BJ (cell line): ENCODE measurements at regions of chr5 and their contacts with region 1.

Region 1: GRCh38 chr5:140244525-140245025 is 58.3 kb downstream of the PFDN1 start:
- DNase-seq: no peak
- H3K4me3 ChIP-seq: no peak overlapping the region
- H3K27me3 ChIP-seq: no peaks in the 10 kb centered on the region
- CTCF ChIP-seq: peak; percentile 86

Region 2: GRCh38 chr5:140196115-140196814 is 48.3 kb before region 1 on chr5:
- CTCF ChIA-PET with region 1: no interaction called
- POLR2A ChIA-PET with region 1: no interaction called
- DNase-seq: no peak
- H3K4me3 ChIP-seq: no peak overlapping the region
- H3K27me3 ChIP-seq: no peaks in the 10 kb centered on the region
- CTCF ChIP-seq: no peak

Region 3: DNA sequence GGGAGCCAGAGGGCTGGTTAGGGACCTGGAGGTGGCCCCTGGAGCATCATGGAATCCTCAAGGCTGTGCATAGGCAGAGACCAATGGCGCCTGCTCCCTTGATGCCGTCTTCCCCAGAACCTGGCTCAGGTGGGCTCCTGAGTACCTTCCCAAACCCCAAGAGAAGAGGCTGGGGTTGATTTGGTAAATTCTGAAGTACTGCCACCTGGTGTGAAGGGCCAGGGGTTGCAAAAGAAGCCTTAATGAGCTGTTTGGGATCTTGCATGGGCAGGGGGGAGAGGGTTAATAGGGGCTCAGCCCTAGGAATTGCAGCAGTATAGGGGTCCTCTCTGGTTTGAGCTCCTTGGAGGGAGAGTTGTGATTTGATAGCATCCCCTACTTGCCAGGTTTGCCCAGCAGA is 17.5 kb before region 1 on chr5:
- CTCF ChIA-PET with region 1: interaction called, 24 read pairs
- POLR2A ChIA-PET with region 1: no interaction called
- DNase-seq: no peak
- H3K4me3 ChIP-seq: no peak overlapping the region
- H3K27me3 ChIP-seq: no peaks in the 10 kb centered on the region
- CTCF ChIP-seq: no peak

Region 4: GRCh38 chr5:140312067-140312790 is 67.7 kb after region 1 on chr5:
- CTCF ChIA-PET with region 1: interaction called, 14 read pairs
- POLR2A ChIA-PET with region 1: no interaction called
- DNase-seq: peak; percentile 74
- H3K4me3 ChIP-seq: no peak overlapping the region
- H3K27me3 ChIP-seq: no peaks in the 10 kb centered on the region
- CTCF ChIP-seq: no peak

Region 5: DNA sequence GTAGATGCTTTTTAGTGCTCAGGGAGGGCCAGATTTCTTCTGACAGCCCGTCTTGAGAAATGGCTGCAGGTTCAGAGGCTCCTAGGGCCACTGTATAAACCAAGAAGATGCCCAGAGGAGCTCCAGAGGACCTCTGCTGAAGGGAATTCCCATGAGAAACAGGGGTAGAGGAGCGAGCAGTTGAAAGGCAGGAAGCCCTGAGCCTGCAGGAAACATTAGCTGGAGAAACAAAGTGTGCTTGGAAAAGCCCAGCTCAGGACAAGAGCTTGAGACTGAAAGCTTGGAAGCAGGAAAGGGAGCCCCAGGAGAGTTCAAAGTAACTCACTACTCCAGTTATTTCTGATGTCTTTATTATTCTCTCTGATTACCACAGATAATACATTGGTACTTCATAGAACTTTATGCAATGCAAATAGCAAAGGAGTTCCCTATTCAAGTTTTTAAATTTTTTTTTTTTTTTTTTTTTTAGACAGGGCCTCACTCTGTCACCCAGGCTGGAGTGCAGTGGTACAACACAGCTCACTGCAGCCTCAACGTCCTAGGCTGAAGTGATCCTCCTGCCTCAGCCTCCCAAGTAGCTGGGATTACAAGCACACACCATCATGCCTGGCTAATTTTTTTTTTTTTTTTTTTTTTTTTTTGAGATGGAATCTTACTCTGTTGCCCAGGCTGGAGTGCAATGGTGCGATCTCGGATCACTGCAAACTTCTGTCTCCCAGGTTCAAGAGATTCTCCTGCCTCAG is 85.3 kb after region 1 on chr5:
- CTCF ChIA-PET with region 1: interaction called, 813 read pairs
- POLR2A ChIA-PET with region 1: no interaction called
- DNase-seq: no peak
- H3K4me3 ChIP-seq: no peak overlapping the region
- H3K27me3 ChIP-seq: no peaks in the 10 kb centered on the region
- CTCF ChIP-seq: no peak

Region 6: DNA sequence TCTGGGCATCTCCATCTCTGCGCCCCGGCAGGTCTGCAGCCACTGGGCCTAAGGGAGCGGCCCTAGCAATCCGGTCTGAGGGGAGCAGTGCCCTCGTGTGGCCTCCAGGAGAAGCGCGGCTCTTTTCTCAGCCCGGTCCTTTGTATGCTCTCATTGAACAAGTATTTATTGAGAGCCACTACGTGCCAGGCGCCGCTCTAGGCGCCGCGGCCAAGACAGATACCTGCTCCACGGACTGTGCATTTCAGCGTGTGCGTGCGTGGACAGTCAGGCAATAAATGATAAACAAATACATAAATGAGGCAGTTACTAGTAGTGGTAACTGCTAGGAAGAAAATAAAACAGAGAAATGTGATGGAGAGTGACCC is 113.1 kb after region 1 on chr5:
- CTCF ChIA-PET with region 1: interaction called, 813 read pairs
- POLR2A ChIA-PET with region 1: no interaction called
- DNase-seq: peak; percentile 41
- H3K4me3 ChIP-seq: no peak overlapping the region
- H3K27me3 ChIP-seq: no peaks in the 10 kb centered on the region
- CTCF ChIP-seq: peak; percentile 95